ENCODE measurements at regions of chr5 and their contacts with region 1.

Region 1: GRCh38 chr5:160802592-160802991 is 49.4 kb downstream of the ATP10B start:
- DNase-seq: peak; percentile 38 to 44
- H3K4me3 ChIP-seq: no peak overlapping the region
- H3K4me3 Mint-ChIP-seq: no peak overlapping the region
- H3K27ac Mint-ChIP-seq: no peak overlapping the region
- H3K4me1 ChIP-seq: 0 out of 2 replicates have a peak, but pooled peaks cover 10% of the 10 kb centered on the region
- H3K4me1 Mint-ChIP-seq: peaks cover 10% of the 10 kb centered on the region
- H3K27me3 ChIP-seq: no peaks in the 10 kb centered on the region
- H3K27me3 Mint-ChIP-seq: no peaks in the 10 kb centered on the region
- CTCF ChIP-seq: peak; percentile 22 to 41

Region 2: DNA sequence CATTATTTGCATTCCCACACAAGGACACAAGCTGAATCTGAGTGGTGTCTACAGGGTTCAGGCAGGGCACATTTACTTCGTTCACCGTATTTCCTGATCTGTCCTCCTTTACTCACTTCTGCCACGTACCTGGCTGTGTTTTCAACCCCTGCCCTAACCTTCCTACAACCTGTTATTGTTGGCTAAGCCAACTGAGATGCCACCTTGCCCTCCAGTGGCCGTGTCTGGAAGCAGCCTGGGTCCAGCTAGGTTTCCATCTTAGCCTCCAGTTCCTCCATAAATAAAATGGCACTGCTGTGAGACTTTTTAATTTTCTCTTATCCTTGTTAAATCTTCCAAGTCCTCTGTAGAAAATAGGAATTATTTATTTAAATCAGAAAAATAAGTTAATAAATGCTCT is 15.4 kb before region 1 on chr5:
- CTCF ChIA-PET with region 1: no interaction called
- POLR2A ChIA-PET with region 1: no interaction called
- intact Hi-C with region 1: no loop called
- DNase-seq: peak; percentile 37 to 40
- H3K4me3 ChIP-seq: no peak overlapping the region
- H3K4me3 Mint-ChIP-seq: no peak overlapping the region
- H3K27ac Mint-ChIP-seq: no peak overlapping the region
- H3K4me1 ChIP-seq: no peaks in the 10 kb centered on the region
- H3K4me1 Mint-ChIP-seq: peaks cover 9% of the 10 kb centered on the region
- H3K27me3 ChIP-seq: no peaks in the 10 kb centered on the region
- H3K27me3 Mint-ChIP-seq: peaks cover 3% of the 10 kb centered on the region
- CTCF ChIP-seq: peak; percentile 54 to 67

Region 3: GRCh38 chr5:161027763-161028162 is 225.2 kb after region 1 on chr5:
- CTCF ChIA-PET with region 1: no interaction called
- POLR2A ChIA-PET with region 1: no interaction called
- intact Hi-C with region 1: loop called (anchors 10 kb)
- DNase-seq: no peak
- H3K4me3 ChIP-seq: no peak overlapping the region
- H3K4me3 Mint-ChIP-seq: no peak overlapping the region
- H3K27ac Mint-ChIP-seq: no peak overlapping the region
- H3K4me1 ChIP-seq: no peaks in the 10 kb centered on the region
- H3K4me1 Mint-ChIP-seq: no peaks in the 10 kb centered on the region
- H3K27me3 ChIP-seq: no peaks in the 10 kb centered on the region
- H3K27me3 Mint-ChIP-seq: peaks cover 4% of the 10 kb centered on the region
- CTCF ChIP-seq: no peak

Region 4: DNA sequence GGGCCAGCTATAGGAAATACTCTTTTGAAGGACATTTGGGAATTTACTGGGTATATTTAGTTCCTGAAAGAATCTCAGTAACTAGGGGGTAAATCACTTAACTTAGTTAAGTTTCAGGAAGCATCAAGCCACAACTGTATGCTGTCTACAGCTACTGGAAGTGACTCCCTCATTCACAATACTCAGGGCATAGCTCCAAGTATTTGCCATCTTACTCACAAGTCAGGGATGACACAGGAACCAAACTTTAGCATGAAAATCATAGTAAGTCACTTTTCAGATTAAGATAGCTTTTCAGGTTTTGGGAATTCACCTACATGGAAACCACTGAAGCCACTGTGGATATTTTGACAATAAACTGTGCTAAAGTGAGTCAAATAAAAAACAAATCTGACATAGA is 291.8 kb after region 1 on chr5:
- CTCF ChIA-PET with region 1: no interaction called
- POLR2A ChIA-PET with region 1: no interaction called
- intact Hi-C with region 1: loop called (anchors 10 kb)
- DNase-seq: no peak
- H3K4me3 ChIP-seq: no peak overlapping the region
- H3K4me3 Mint-ChIP-seq: no peak overlapping the region
- H3K27ac Mint-ChIP-seq: no peak overlapping the region
- H3K4me1 ChIP-seq: no peaks in the 10 kb centered on the region; the same call in 1 of the 2 replicates
- H3K4me1 Mint-ChIP-seq: peaks cover 9% of the 10 kb centered on the region
- H3K27me3 ChIP-seq: no peaks in the 10 kb centered on the region
- H3K27me3 Mint-ChIP-seq: no peaks in the 10 kb centered on the region
- CTCF ChIP-seq: no peak

Measured in Caco-2 (cell line).